BJ (cell line): ENCODE measurements at regions of chr5 and their contacts with region 1.

Region 1: GRCh38 chr5:141564216-141564692 is 54.5 kb downstream of the DIAPH1 start:
- DNase-seq: peak; percentile 73
- H3K4me3 ChIP-seq: no peak overlapping the region
- H3K27me3 ChIP-seq: no peaks in the 10 kb centered on the region
- CTCF ChIP-seq: peak; percentile 79

Region 2: GRCh38 chr5:141320225-141321169 is 243.8 kb before region 1 on chr5 and contains the start of gene TAF7:
- CTCF ChIA-PET with region 1: interaction called, 85 read pairs
- POLR2A ChIA-PET with region 1: no interaction called
- DNase-seq: peak; percentile 63
- H3K4me3 ChIP-seq: peak within 1 kb of the TSS; percentile 73
- H3K27me3 ChIP-seq: no peaks in the 10 kb centered on the region
- CTCF ChIP-seq: peak; percentile 86
- polyA plus RNA-seq, gene TAF7: 25.5 and 46.7 TPM in 2 replicates

Region 3: DNA sequence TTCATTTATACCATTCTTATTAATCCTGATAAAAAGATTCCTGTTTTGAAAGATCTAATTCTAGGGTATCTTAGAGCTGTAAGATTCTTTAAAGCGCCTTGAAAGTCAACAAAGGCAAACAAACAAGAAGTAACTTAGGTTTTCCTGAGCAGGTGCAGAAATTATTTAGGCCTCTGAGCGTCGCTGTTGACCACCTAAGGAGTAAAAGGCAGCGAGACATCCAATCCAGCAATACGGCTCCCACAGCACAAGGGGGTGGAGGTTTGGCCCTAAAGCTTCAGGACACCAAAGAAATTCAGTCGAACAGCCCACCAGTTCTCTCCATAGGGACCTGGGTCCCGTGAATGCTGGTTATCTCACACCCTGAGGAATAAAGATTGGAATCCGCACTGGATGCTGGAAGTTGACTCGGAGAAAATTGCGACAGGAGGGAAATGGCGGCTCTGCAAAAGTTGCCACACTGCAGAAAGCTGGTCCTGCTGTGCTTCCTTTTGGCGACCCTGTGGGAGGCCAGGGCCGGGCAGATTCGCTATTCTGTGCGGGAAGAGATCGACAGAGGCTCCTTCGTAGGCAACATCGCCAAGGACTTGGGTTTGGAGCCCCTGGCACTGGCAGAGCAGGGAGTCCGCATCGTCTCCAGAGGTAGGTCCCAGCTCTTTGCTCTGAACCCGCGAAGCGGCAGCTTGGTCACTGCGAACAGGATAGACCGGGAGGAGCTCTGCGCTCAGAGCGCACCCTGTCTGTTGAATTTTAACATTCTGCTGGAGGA is 225.5 kb before region 1 on chr5 and contains the start of gene PCDHGA2:
- CTCF ChIA-PET with region 1: interaction called, 37 read pairs
- POLR2A ChIA-PET with region 1: no interaction called
- DNase-seq: no peak
- H3K4me3 ChIP-seq: peak within 1 kb of the TSS; percentile 38
- H3K27me3 ChIP-seq: no peaks in the 10 kb centered on the region
- CTCF ChIP-seq: peak; percentile 66
- polyA plus RNA-seq, gene PCDHGA2: 6.7 and 6.8 TPM in 2 replicates

Region 4: DNA sequence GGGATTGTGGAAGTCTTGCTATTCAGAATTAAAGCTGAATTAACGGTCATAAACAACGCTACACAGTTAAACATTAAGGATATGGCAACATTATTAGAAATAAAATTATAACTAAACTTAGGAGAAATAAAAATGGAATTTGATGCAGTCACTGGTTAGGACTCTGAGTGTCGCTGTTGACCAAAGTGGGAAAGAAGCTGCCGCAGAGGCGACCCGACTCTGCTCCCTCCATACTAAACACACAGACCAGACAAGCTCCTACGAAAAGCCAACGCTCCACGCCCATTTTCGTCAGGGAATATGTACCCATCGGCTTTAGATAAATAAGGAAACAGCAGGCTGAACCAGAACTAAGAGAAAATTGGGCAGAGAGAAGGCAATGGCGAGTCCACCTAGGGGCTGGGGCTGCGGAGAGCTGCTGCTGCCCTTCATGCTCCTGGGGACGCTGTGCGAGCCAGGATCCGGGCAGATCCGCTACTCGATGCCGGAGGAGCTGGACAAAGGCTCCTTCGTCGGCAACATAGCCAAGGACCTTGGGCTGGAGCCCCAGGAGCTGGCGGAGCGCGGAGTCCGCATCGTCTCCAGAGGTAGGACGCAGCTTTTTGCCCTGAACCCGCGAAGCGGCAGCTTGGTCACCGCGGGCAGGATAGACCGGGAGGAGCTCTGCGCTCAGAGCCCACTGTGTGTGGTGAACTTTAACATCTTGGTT is 200.1 kb before region 1 on chr5 and contains the start of gene PCDHGA5:
- CTCF ChIA-PET with region 1: interaction called, 17 read pairs
- POLR2A ChIA-PET with region 1: no interaction called
- DNase-seq: no peak
- H3K4me3 ChIP-seq: peak within 1 kb of the TSS; percentile 30
- H3K27me3 ChIP-seq: peaks cover 2% of the 10 kb centered on the region; the same call in 1 of the 2 replicates
- CTCF ChIP-seq: peak; percentile 32; the same call in 1 of the 2 replicates
- polyA plus RNA-seq, gene PCDHGA5: 1.2 and 1.6 TPM in 2 replicates

Region 5: GRCh38 chr5:141387233-141387949 is 176.9 kb before region 1 on chr5 and contains the start of gene PCDHGB4:
- CTCF ChIA-PET with region 1: interaction called, 10 read pairs
- POLR2A ChIA-PET with region 1: no interaction called
- DNase-seq: no peak
- H3K4me3 ChIP-seq: peak within 1 kb of the TSS; percentile 22; the same call in 1 of the 2 replicates
- H3K27me3 ChIP-seq: no peaks in the 10 kb centered on the region
- CTCF ChIP-seq: peak; percentile 60
- polyA plus RNA-seq, gene PCDHGB4: 11.8 and 12.2 TPM in 2 replicates

Region 6: DNA sequence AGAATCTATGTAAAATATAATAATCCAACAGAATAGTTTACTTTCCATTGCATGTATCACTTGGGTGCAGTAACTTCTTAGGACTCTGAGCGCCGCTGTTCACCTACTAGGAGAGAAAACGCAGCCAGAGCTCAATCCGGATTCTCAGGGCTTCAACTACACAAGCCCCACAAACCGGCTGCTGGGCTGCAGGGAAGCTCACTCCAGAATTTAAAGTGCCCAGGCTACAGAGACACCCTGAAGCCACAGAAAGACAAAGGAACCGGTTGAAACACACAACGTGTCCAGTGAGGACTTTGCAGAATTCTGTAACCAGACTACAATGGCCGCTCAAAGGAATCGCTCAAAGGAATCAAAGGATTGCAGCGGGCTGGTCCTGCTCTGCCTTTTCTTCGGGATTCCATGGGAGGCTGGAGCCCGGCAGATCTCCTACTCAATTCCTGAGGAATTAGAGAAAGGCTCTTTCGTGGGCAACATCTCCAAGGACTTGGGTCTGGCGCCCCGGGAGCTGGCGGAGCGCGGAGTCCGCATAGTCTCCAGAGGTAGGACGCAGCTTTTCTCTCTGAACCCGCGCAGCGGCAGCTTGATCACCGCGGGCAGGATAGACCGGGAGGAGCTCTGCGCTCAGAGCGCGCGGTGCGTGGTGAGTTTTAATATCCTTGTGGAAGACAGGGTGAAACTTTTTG is 151.3 kb before region 1 on chr5 and contains the start of gene PCDHGA10:
- CTCF ChIA-PET with region 1: interaction called, 112 read pairs
- POLR2A ChIA-PET with region 1: no interaction called
- DNase-seq: no peak
- H3K4me3 ChIP-seq: peak within 1 kb of the TSS; percentile 33
- H3K27me3 ChIP-seq: no peaks in the 10 kb centered on the region
- CTCF ChIP-seq: peak; percentile 67
- polyA plus RNA-seq, gene PCDHGA10: 2.7 and 3.9 TPM in 2 replicates

Region 7: DNA sequence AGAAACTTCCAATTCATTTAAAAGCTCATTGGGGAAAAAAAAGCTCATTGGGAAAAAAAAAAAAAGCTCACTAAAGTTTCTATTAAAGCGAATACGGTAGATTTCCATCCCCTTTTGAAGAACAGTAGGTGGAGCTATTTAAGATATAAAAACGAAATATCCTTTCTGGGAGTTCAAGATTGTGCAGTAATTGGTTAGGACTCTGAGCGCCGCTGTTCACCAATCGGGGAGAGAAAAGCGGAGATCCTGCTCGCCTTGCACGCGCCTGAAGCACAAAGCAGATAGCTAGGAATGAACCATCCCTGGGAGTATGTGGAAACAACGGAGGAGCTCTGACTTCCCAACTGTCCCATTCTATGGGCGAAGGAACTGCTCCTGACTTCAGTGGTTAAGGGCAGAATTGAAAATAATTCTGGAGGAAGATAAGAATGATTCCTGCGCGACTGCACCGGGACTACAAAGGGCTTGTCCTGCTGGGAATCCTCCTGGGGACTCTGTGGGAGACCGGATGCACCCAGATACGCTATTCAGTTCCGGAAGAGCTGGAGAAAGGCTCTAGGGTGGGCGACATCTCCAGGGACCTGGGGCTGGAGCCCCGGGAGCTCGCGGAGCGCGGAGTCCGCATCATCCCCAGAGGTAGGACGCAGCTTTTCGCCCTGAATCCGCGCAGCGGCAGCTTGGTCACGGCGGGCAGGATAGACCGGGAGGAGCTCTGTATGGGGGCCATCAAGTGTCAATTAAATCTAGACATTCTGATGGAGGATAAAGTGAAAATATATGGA is 133.7 kb before region 1 on chr5 and contains the start of gene PCDHGA12:
- CTCF ChIA-PET with region 1: interaction called, 72 read pairs
- POLR2A ChIA-PET with region 1: no interaction called
- DNase-seq: no peak
- H3K4me3 ChIP-seq: peak within 1 kb of the TSS; percentile 39
- H3K27me3 ChIP-seq: no peaks in the 10 kb centered on the region
- CTCF ChIP-seq: peak; percentile 59
- polyA plus RNA-seq, gene PCDHGA12: 6.1 and 7.9 TPM in 2 replicates

Region 8: DNA sequence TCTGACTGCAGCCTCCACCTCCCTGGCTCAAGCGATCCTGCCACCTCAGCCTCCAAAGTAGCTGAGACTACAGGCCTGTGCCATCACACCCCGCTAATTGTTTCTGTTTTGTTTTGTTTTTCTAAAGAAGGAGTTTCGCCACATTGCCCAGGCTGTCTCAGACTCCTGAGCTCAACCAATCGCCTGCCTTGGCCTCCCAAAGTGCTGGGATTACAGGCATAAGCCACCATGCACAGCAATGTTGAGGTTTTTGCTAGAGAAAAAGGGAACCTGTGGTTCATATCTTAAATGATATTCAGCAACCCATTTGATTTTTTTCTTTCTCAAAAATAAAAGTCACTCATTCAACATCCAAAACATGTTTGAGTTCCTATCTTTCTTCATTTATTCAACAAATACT is 339.0 kb after region 1 on chr5:
- CTCF ChIA-PET with region 1: no interaction called
- POLR2A ChIA-PET with region 1: no interaction called
- DNase-seq: no peak
- H3K4me3 ChIP-seq: no peak overlapping the region
- H3K27me3 ChIP-seq: peaks cover 7% of the 10 kb centered on the region
- CTCF ChIP-seq: no peak